Activated naive CD4-positive, alpha-beta T cell treated with anti-CD3 and anti-CD28 coated beads for 36 hours (primary cell): ENCODE measurements at regions of chr3 and their contacts with region 1.

Region 1: DNA sequence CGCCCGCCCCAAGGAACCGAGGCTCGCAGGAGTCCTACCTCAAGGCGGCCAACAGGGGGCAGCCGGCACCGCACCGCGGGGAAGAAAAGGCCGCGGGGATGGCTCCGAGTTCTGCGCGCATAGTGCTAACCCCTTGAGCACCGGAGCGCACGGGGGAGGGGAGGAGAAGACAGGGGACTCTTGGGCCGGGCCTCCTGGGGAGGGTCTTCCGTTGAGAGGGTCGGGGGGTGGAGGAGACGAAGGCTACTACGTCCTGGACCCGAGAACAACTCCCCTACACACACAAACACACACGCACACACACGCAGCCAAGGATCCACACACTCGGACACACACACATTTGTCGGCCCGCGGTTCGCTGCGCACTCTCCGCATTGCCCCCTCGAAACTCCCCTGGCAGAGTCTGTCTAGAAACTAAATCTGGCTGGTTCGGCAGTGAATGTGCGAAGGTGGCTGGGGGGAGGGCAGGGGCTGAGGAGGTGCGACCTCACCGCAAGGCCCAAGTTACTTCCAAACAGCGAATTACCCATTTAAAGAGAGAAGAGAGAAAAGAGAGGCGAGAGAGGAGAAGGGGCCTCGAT is 1.8 kb downstream of the WNT5A start:
- DNase-seq: peak; percentile 59
- H3K4me3 Mint-ChIP-seq: no peak overlapping the region
- H3K27ac Mint-ChIP-seq: no peak overlapping the region
- H3K4me1 Mint-ChIP-seq: peaks cover 28% of the 10 kb centered on the region
- H3K27me3 Mint-ChIP-seq: peaks cover 80% of the 10 kb centered on the region

Region 2: DNA sequence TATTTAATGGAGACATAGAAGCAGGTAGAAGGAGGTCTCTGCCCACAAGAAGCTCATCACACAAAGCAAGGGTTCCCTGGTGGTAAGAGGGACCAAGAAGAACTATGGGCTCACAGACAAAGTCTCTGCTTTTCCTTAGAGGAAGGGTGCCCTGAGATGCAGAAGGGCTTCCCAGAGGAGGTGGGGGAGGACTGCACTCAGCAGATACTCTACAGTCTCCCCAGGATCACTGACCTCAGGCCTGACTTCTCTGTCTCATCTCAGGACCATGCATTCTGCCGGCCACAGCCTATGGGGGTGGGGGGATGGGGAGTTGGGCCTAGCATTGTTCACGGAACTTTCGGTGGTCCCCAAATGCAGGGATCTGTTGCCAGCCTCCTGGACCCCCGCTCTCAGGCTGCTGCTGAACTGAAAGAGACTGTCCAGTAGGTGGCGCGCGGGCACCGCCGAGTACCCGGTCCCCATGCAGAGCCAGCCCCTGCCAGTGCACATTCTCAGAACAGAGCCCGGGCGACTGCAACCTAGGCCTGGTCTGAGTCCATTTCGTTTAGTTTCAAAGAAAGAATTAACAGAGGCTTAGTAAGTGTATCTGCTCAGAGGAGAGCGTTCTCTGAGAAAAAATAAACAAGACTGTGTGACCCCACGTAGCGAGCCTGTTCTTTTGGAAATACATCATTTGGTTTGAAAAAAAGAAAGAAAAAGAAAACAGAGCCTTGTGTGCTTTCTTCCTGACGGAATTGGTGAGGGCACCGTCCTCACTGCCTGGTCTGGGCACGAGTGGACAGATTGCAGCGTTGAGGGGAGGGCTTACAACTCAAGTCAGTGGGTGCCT is 631.5 kb before region 1 on chr3:
- CTCF ChIA-PET with region 1: no interaction called
- intact Hi-C with region 1: loop called (anchors 5 kb)
- DNase-seq: peak; percentile 55
- H3K4me3 Mint-ChIP-seq: no peak overlapping the region
- H3K27ac Mint-ChIP-seq: no peak overlapping the region
- H3K4me1 Mint-ChIP-seq: no peaks in the 10 kb centered on the region
- H3K27me3 Mint-ChIP-seq: peaks cover 6% of the 10 kb centered on the region

Region 3: GRCh38 chr3:55721716-55722484 is 236.6 kb after region 1 on chr3:
- CTCF ChIA-PET with region 1: no interaction called
- intact Hi-C with region 1: loop called (anchors 1 kb)
- DNase-seq: peak; percentile 8
- H3K4me3 Mint-ChIP-seq: no peak overlapping the region
- H3K27ac Mint-ChIP-seq: no peak overlapping the region
- H3K4me1 Mint-ChIP-seq: no peaks in the 10 kb centered on the region
- H3K27me3 Mint-ChIP-seq: peaks cover 9% of the 10 kb centered on the region

Region 4: DNA sequence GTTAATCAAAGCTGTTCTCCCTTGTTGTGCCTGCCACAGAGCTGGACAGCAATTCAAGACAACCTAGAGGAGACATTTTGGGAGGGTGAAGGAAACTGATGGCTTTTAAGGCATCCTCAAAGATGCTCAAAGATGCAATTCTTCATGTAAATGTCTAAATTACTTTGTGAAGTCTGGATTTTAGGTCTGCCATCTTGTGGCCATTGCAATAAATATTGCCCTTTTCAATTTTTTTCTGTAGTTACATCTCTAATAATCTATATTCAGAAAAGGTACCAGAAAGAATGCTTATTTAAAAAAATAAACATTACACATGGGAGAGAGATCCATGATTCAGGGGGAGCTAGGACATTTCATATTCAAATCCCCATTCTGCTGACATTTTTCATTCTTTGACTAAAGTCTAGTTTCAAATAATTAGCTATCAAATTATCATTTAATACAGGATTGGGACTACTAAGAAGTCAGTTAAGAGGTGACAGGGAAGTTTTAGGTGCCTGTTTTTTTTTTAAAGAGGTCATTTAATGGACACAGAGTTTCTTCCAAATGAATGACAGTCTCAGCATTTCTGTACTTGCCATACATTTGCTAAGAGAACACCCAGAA is 261.6 kb after region 1 on chr3:
- CTCF ChIA-PET with region 1: interaction called, 3 read pairs
- intact Hi-C with region 1: loop called (anchors 2 kb)
- DNase-seq: no peak
- H3K4me3 Mint-ChIP-seq: no peak overlapping the region
- H3K27ac Mint-ChIP-seq: no peak overlapping the region
- H3K4me1 Mint-ChIP-seq: no peaks in the 10 kb centered on the region
- H3K27me3 Mint-ChIP-seq: no peaks in the 10 kb centered on the region

Region 5: DNA sequence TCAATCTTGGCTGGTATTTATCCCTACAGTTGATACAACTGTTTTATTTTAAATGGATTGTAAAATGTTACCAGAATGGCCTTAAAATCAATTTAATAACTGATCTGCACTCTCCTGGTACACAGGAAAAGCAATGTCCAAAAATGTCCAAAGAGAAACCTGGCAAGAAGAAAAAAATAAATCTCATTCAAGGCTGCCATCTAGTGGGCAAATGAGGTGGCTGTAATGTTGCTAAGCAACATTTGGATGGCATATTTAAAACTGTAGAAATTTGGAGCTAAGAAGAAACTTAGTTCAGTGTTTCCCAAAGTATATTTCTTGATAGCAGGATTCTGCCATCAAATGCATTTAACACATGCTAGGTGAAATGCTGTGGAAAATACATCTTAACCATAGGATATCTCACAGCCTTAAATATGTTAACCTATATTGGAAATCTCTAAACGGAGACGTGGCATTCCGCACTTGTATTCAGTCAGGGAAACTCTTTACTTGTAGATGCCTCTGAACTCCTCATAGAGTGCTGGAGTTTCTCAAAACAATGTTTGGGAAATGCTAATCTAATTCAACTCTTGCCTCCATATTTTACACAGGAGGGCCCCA is 766.1 kb after region 1 on chr3:
- CTCF ChIA-PET with region 1: no interaction called
- intact Hi-C with region 1: loop called (anchors 2 kb)
- DNase-seq: peak; percentile 35
- H3K4me3 Mint-ChIP-seq: no peak overlapping the region
- H3K27ac Mint-ChIP-seq: no peak overlapping the region
- H3K4me1 Mint-ChIP-seq: no peaks in the 10 kb centered on the region
- H3K27me3 Mint-ChIP-seq: peaks cover 5% of the 10 kb centered on the region

Region 6: GRCh38 chr3:56303487-56303886 is 818.2 kb after region 1 on chr3:
- CTCF ChIA-PET with region 1: no interaction called
- intact Hi-C with region 1: loop called (anchors 1 kb)
- DNase-seq: peak; percentile 25
- H3K4me3 Mint-ChIP-seq: no peak overlapping the region
- H3K27ac Mint-ChIP-seq: no peak overlapping the region
- H3K4me1 Mint-ChIP-seq: no peaks in the 10 kb centered on the region
- H3K27me3 Mint-ChIP-seq: peaks cover 17% of the 10 kb centered on the region

Region 7: DNA sequence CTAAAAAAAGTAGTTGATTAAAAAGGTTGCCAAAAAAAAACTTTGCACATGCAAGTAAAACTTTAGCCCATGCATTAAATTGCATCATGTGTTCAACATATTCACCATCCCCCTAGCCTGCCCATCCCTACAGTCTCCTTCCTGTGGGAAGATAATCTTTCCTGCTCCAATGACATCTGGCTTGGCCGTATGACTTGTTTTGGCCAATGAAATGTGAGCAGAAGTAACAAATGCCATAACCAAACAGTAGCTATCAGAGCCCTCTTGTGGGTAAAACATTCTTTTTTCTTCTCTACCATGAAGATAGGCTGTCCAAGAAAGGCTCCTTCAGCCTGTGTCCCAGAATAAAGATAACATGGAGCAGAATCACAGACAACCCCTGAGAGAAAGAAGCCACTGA is 967.7 kb after region 1 on chr3:
- CTCF ChIA-PET with region 1: no interaction called
- intact Hi-C with region 1: loop called (anchors 5 kb)
- DNase-seq: no peak
- H3K4me3 Mint-ChIP-seq: no peak overlapping the region
- H3K27ac Mint-ChIP-seq: no peak overlapping the region
- H3K4me1 Mint-ChIP-seq: no peaks in the 10 kb centered on the region
- H3K27me3 Mint-ChIP-seq: peaks cover 27% of the 10 kb centered on the region